K562 (cell line): ENCODE measurements at regions of chr10 and their contacts with region 1.

Region 1: GRCh38 chr10:13371897-13372470 is 23.9 kb upstream of the SEPHS1 start:
- DNase-seq: peak; percentile 87 to 90 (median 90)
- ATAC-seq: peak; percentile 100
- H3K4me3 ChIP-seq: no peak overlapping the region
- H3K27ac ChIP-seq: no peak overlapping the region
- H3K4me1 ChIP-seq: peaks cover 0 to 4% of the 10 kb centered on the region in 2 experiments; a peak in 2 of 5 replicates
- H3K27me3 ChIP-seq: no peaks in the 10 kb centered on the region
- CTCF ChIP-seq: peak; percentile 91 to 99 (median 97)
- EP300 ChIP-seq: no peak; the same call in 1 of the 2 replicates
- POLR2A ChIP-seq: no peak
- RAD21 ChIP-seq: peak; percentile 97 to 98

Region 2: GRCh38 chr10:13440185-13441061 is 68.4 kb after region 1 on chr10:
- CTCF ChIA-PET with region 1: interaction called, 27 read pairs
- POLR2A ChIA-PET with region 1: interaction called, 7 read pairs
- in situ Hi-C with region 1: loop called (anchors 5 kb)
- intact Hi-C with region 1: loop called (anchors 1 kb)
- DNase-seq: peak; percentile 77 to 85 (median 84)
- ATAC-seq: peak; percentile 97
- H3K4me3 ChIP-seq: 0 out of 2 replicates have a peak overlapping the region, but pooled peaks have one; percentile 23
- H3K27ac ChIP-seq: no peak overlapping the region
- H3K4me1 ChIP-seq: peaks cover 13 to 19% of the 10 kb centered on the region in 2 experiments; a peak in 4 of 5 replicates
- H3K27me3 ChIP-seq: no peaks in the 10 kb centered on the region
- CTCF ChIP-seq: peak; percentile 89 to 94 (median 93)
- EP300 ChIP-seq: no peak
- POLR2A ChIP-seq: no peak
- RAD21 ChIP-seq: peak; percentile 84 to 87

Region 3: DNA sequence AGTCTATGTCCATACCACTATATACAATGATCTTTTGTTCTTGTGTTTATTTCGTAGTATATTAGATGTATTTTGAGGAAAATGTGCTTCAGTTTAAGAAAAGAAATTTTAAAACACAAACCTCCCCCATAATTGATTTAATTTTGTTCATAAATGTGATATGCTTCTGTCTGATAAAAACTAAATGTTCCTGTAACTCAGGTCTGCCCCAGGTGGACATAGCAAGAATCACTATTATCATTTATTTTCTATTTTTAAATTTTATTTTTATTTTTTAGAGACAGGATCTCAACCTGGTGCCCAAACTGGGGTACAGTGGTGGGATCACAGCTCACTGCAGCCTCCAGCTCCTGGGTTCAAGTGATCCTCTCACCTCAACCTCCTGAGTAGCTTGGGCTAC is 113.6 kb after region 1 on chr10:
- CTCF ChIA-PET with region 1: interaction called, 11 read pairs
- POLR2A ChIA-PET with region 1: no interaction called
- in situ Hi-C with region 1: no loop called
- intact Hi-C with region 1: no loop called
- DNase-seq: peak in 2 of 4 experiments; percentile 17
- ATAC-seq: peak; percentile 39; the same call in 1 of the 3 replicates
- H3K4me3 ChIP-seq: no peak overlapping the region
- H3K27ac ChIP-seq: no peak overlapping the region
- H3K4me1 ChIP-seq: no peaks in the 10 kb centered on the region
- H3K27me3 ChIP-seq: peaks cover 0 to 5% of the 10 kb centered on the region in 2 experiments; a peak in 1 of 5 replicates
- CTCF ChIP-seq: peak in 2 of 3 experiments; percentile 35 to 49; a peak in 3 of 6 replicates
- EP300 ChIP-seq: no peak
- POLR2A ChIP-seq: no peak
- RAD21 ChIP-seq: no peak

Region 4: GRCh38 chr10:13536674-13537366 is 164.8 kb after region 1 on chr10:
- CTCF ChIA-PET with region 1: interaction called, 10 read pairs
- POLR2A ChIA-PET with region 1: interaction called, 5 read pairs
- in situ Hi-C with region 1: no loop called
- intact Hi-C with region 1: loop called (anchors 1 kb)
- DNase-seq: peak; percentile 39 to 70 (median 56)
- ATAC-seq: peak; percentile 97
- H3K4me3 ChIP-seq: no peak overlapping the region
- H3K27ac ChIP-seq: no peak overlapping the region
- H3K4me1 ChIP-seq: no peaks in the 10 kb centered on the region; a peak in 2 of 5 replicates
- H3K27me3 ChIP-seq: peaks cover 17 to 25% of the 10 kb centered on the region in 2 experiments
- CTCF ChIP-seq: peak; percentile 75 to 84 (median 77)
- EP300 ChIP-seq: no peak
- POLR2A ChIP-seq: no peak
- RAD21 ChIP-seq: peak; percentile 33 to 78; a peak in 3 of 4 replicates

Region 5: GRCh38 chr10:13776861-13777311 is 404.9 kb after region 1 on chr10:
- CTCF ChIA-PET with region 1: interaction called, 7 read pairs
- POLR2A ChIA-PET with region 1: interaction called, 3 read pairs
- in situ Hi-C with region 1: no loop called
- intact Hi-C with region 1: loop called (anchors 5 kb)
- DNase-seq: no peak
- ATAC-seq: no peak
- H3K4me3 ChIP-seq: no peak overlapping the region
- H3K27ac ChIP-seq: no peak overlapping the region
- H3K4me1 ChIP-seq: no peaks in the 10 kb centered on the region
- H3K27me3 ChIP-seq: peaks cover 27 to 31% of the 10 kb centered on the region in 2 experiments; a peak in 4 of 5 replicates
- CTCF ChIP-seq: no peak
- EP300 ChIP-seq: no peak
- POLR2A ChIP-seq: no peak
- RAD21 ChIP-seq: no peak